Activated CD4-positive, alpha-beta memory T cell treated with anti-CD3 and anti-CD28 coated beads for 36 hours (primary cell): ENCODE measurements at regions of chr21 and their contacts with region 1.

Region 1: GRCh38 chr21:44801468-44802395 is at the start of gene UBE2G2:
- DNase-seq: peak; percentile 91
- H3K4me3 Mint-ChIP-seq: peak within 1 kb of the TSS; percentile 99
- H3K27ac Mint-ChIP-seq: peak within 1 kb of the TSS; percentile 89
- H3K4me1 Mint-ChIP-seq: peaks cover 54% of the 10 kb centered on the region
- H3K27me3 Mint-ChIP-seq: no peaks in the 10 kb centered on the region
- total RNA-seq, gene UBE2G2: 87.6 to 96.0 TPM

Region 2: DNA sequence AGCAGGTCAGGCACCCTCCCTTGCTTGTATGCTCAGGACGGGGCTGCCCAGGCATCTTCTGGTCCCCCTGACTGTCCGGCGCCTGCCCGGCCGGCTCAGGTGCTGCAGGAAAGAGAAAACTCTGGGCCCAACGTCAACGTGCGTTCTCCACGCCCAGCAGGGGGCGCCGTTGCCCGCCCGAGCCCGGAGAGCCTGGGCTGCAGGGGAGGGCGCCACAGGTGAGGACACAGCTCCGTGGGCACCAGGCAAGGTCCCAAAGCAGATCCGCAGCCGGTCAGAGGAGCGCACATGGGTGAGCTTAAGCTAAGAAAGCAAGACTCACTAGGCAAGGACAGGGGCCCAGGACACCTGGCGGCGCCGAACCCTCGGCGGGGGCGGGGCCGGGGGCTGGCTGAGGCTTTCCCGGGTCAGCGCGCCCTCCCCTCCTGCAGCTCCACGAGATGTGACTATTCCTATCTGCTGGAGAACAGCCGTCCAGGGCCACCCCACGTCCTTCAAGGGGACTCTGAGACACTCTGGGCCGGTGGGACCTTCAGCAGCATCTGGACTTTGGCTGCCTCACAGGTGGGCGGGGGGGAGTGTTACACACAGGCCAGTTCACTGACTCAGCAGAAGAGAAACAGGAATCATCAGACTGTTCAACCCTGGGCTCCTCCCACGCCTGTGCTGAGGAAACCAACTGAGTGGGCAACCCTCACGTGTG is 291.1 kb before region 1 on chr21:
- CTCF ChIA-PET with region 1: interaction called, 11 read pairs
- POLR2A ChIA-PET with region 1: no interaction called
- intact Hi-C with region 1: no loop called
- DNase-seq: peak; percentile 82
- H3K4me3 Mint-ChIP-seq: no peak overlapping the region
- H3K27ac Mint-ChIP-seq: no peak overlapping the region
- H3K4me1 Mint-ChIP-seq: no peaks in the 10 kb centered on the region
- H3K27me3 Mint-ChIP-seq: no peaks in the 10 kb centered on the region

Region 3: DNA sequence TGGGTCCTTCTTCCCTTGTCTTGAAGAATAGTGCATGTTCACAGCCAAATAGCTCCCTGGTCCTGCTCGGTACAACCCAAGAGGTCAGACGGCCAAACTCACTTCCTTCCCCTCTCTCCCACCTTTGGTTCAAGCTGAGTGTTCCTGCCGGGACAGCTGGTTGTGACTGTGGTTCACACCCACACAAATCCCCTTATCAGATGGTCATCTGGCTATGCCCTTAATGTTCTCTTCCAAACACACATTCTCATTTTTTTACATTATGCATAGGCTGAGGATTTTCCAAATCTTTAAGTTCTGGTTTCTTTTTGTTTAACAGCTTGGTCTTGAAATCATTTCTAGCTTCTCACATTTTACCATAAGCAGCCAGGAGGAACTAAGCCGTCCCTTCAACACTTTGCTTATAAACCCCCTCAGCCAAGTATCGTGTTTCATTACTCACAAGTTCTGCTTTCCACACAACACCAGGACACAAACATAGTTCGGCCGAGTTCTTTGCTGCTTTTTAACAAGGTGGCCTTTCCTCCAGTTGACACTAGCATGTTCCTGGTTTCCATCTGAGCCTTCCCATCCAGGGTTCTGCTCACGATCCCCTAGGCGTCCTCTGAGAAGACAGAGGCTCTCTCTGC is 70.7 kb before region 1 on chr21:
- CTCF ChIA-PET with region 1: no interaction called
- POLR2A ChIA-PET with region 1: no interaction called
- intact Hi-C with region 1: no loop called
- DNase-seq: no peak
- H3K4me3 Mint-ChIP-seq: no peak overlapping the region
- H3K27ac Mint-ChIP-seq: no peak overlapping the region
- H3K4me1 Mint-ChIP-seq: no peaks in the 10 kb centered on the region
- H3K27me3 Mint-ChIP-seq: peaks cover 11% of the 10 kb centered on the region

Region 4: DNA sequence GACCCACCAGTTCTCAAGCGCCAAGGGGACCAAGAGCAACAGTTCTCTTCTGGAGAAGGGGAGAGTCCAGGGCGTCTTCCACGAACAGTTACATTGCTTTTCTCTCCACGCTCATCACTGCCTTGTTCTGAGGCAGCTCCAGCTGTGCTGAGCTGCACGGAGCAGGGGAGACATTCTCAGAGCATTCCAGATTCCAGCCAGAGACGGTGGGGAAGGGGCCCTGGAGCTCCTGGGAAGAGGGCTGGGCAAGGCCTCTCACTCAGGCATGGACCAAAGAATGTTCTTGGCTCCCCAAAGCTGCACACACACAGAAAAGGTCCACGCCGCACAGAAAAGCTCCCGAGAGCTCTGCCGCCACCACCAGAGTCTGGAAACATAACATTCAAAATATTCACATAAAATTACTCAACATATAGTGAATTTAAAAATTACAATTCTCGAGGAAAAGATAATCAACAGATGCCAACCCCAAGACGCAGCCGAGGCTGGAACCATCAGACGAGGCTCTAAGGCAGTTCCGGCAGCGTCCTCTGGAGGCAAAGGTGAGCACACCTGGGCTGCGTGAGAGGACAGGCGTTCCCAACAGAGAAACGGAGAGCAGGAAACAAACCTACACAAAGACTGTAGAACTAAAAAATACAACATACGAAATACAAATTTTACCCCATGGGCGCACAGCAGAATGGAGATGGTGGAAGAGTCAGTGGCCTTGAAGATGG is 40.6 kb before region 1 on chr21:
- CTCF ChIA-PET with region 1: no interaction called
- POLR2A ChIA-PET with region 1: no interaction called
- intact Hi-C with region 1: no loop called
- DNase-seq: peak; percentile 28
- H3K4me3 Mint-ChIP-seq: no peak overlapping the region
- H3K27ac Mint-ChIP-seq: no peak overlapping the region
- H3K4me1 Mint-ChIP-seq: peaks cover 13% of the 10 kb centered on the region
- H3K27me3 Mint-ChIP-seq: no peaks in the 10 kb centered on the region

Region 5: DNA sequence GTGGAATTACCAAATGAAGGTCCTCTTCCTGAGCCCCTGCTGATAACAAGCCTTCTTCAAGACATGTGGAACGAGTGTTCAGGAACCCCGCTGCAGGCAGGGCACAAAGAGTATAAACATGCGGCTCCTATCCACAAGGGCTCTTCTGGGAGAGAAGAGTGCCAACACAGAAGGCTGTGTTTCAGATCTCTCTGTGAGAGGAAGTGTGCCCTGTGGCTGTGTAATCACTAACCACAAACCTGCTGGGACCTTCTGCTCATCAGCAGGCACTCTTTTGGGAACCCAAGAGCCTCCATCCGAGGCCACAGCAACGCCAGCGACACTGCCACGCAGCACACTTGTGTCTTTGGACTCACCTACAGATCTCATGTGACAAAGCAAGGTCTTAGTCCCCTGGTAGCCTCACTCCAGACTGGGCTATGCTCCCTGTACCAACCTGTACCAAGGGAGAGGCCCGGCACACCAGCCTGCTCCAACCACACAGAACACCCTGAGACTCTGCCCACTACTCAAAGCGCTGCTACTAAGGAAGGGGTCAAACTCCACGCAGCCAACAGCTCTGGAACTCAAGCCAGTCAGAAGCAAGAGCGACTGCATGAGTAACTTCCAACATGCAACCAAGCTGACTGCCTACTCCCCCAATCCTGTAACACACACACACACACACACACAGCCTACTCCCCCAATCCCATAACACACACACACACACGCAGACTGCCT is 64.0 kb after region 1 on chr21:
- CTCF ChIA-PET with region 1: interaction called, 17 read pairs
- POLR2A ChIA-PET with region 1: interaction called, 3 read pairs
- intact Hi-C with region 1: no loop called
- DNase-seq: peak; percentile 51
- H3K4me3 Mint-ChIP-seq: peak overlapping the region; percentile 23
- H3K27ac Mint-ChIP-seq: peak overlapping the region; percentile 86
- H3K4me1 Mint-ChIP-seq: peaks cover 63% of the 10 kb centered on the region
- H3K27me3 Mint-ChIP-seq: no peaks in the 10 kb centered on the region

Region 6: DNA sequence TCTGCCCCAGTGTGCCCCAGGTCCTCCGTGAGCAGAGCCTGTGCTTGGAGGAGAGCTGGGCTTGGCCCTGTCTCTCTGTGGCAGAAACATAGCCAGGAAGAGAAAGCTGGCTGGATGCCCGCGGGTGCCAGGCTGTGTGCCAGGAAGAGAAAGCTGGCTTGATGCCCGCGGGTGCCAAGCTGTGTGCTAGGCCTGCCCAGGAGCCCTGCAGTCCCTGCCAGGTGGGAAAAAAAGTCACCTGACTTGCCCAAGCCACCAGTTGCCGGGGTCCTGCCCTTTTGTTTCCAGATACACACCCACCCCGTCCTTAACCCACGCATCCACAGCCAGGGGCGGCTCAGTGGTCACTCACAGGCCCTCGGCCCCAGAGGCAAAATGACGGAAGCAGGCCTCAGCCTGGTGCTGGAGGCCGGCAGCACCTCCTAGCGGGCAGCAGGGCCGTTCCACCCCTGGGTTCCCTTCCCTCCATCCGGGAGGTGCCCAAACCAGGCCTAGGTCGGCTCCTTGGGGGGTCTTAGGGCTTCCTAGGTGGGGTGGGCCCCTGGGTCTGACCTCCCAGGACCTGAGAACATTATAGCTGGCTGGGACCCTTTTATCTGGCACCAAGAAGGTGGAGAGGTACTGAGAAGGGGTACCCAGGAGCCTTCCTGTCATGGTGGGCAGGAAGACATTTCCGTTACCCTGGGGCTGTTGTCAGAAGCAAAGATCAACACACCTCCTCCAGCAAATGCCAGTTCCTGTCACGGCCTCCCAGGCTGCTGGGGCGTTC is 109.8 kb after region 1 on chr21:
- CTCF ChIA-PET with region 1: interaction called, 31 read pairs
- POLR2A ChIA-PET with region 1: no interaction called
- intact Hi-C with region 1: no loop called
- DNase-seq: peak; percentile 75
- H3K4me3 Mint-ChIP-seq: peak overlapping the region; percentile 58
- H3K27ac Mint-ChIP-seq: peak overlapping the region; percentile 93
- H3K4me1 Mint-ChIP-seq: peaks cover 60% of the 10 kb centered on the region
- H3K27me3 Mint-ChIP-seq: no peaks in the 10 kb centered on the region

Region 7: GRCh38 chr21:44927587-44928461 is 126.1 kb after region 1 on chr21:
- CTCF ChIA-PET with region 1: interaction called, 84 read pairs
- POLR2A ChIA-PET with region 1: interaction called, 3 read pairs
- intact Hi-C with region 1: loop called (anchors 2 kb)
- DNase-seq: peak; percentile 96
- H3K4me3 Mint-ChIP-seq: peak overlapping the region; percentile 85
- H3K27ac Mint-ChIP-seq: peak overlapping the region; percentile 96
- H3K4me1 Mint-ChIP-seq: peaks cover 74% of the 10 kb centered on the region
- H3K27me3 Mint-ChIP-seq: no peaks in the 10 kb centered on the region